Dendritic cell treated with granulocyte-macrophage colony-stimulating factor and Interleukin-4, amounts not matched to agents 40 ng/mL and 50 ng/mL, for 4 days (primary cell): ENCODE measurements at regions of chr14 and their contacts with region 1.

Region 1: GRCh38 chr14:63388763-63389431 is 70.2 kb upstream of the GPHB5 start:
- H3K4me3 Mint-ChIP-seq: no peak overlapping the region
- H3K27ac Mint-ChIP-seq: no peak overlapping the region
- H3K4me1 Mint-ChIP-seq: peaks cover 3% of the 10 kb centered on the region
- H3K27me3 Mint-ChIP-seq: no peaks in the 10 kb centered on the region

Region 2: GRCh38 chr14:63543000-63543825 is 154.3 kb after region 1 on chr14 and contains the start of gene PPP2R5E:
- intact Hi-C with region 1: loop called (anchors 5 kb)
- H3K4me3 Mint-ChIP-seq: peak within 1 kb of the TSS; percentile 93
- H3K27ac Mint-ChIP-seq: peak within 1 kb of the TSS; percentile 94
- H3K4me1 Mint-ChIP-seq: peaks cover 22% of the 10 kb centered on the region
- H3K27me3 Mint-ChIP-seq: no peaks in the 10 kb centered on the region

Region 3: GRCh38 chr14:63624203-63624602 is 235.3 kb after region 1 on chr14:
- intact Hi-C with region 1: loop called (anchors 10 kb)
- H3K4me3 Mint-ChIP-seq: no peak overlapping the region
- H3K27ac Mint-ChIP-seq: no peak overlapping the region
- H3K4me1 Mint-ChIP-seq: no peaks in the 10 kb centered on the region
- H3K27me3 Mint-ChIP-seq: no peaks in the 10 kb centered on the region

Region 4: GRCh38 chr14:63770187-63770807 is 381.4 kb after region 1 on chr14:
- intact Hi-C with region 1: loop called (anchors 1 kb)
- H3K4me3 Mint-ChIP-seq: no peak overlapping the region
- H3K27ac Mint-ChIP-seq: no peak overlapping the region
- H3K4me1 Mint-ChIP-seq: peaks cover 10% of the 10 kb centered on the region
- H3K27me3 Mint-ChIP-seq: no peaks in the 10 kb centered on the region